Activated CD4-positive, alpha-beta T cell treated with anti-CD3 and anti-CD28 coated beads, Interleukin-2, amount 10 ng/mL, durations not matched to agents 24 days and 14 days (primary cell): ENCODE measurements at regions of chr17 and their contacts with region 1.

Region 1: GRCh38 chr17:37744961-37745800 is at the start of gene HNF1B:
- DNase-seq: peak; percentile 71
- H3K4me3 Mint-ChIP-seq: peak within 1 kb of the TSS; percentile 81
- H3K27ac Mint-ChIP-seq: peak within 1 kb of the TSS; percentile 53
- H3K4me1 Mint-ChIP-seq: peaks cover 13% of the 10 kb centered on the region
- H3K27me3 Mint-ChIP-seq: peaks cover 70% of the 10 kb centered on the region
- total RNA-seq, gene HNF1B: 2.2 and 2.9 TPM in 2 replicates

Region 2: DNA sequence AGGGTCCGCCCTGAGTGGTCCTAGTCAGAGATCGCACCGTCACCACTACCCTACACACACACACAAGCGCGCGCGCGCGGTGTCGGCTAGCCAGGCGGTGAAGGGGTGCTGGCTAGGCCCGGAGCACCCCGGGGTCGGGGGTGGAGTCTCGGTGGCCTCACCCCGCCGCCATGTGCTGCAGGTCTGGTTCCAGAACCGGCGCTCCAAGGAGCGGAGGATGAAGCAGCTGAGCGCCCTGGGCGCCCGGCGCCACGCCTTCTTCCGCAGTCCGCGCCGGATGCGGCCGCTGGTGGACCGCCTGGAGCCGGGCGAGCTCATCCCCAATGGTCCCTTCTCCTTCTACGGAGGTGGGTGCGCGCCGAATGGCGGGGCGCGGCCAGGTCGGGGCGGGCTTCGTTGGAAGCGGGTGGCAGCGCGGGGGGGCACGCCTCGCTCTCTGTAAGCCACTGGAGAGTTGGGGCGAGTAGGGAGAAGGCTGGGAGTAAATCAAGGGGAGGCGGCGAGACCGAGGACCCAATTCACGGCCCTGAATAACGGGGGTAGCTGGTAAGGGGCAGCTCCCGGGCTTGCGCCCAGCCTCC is 803.1 kb before region 1 on chr17:
- intact Hi-C with region 1: loop called (anchors 5 kb)
- DNase-seq: peak; percentile 67
- H3K4me3 Mint-ChIP-seq: peak overlapping the region; percentile 2
- H3K27ac Mint-ChIP-seq: peak overlapping the region; percentile 39
- H3K4me1 Mint-ChIP-seq: peaks cover 25% of the 10 kb centered on the region
- H3K27me3 Mint-ChIP-seq: peaks cover 78% of the 10 kb centered on the region

Region 3: DNA sequence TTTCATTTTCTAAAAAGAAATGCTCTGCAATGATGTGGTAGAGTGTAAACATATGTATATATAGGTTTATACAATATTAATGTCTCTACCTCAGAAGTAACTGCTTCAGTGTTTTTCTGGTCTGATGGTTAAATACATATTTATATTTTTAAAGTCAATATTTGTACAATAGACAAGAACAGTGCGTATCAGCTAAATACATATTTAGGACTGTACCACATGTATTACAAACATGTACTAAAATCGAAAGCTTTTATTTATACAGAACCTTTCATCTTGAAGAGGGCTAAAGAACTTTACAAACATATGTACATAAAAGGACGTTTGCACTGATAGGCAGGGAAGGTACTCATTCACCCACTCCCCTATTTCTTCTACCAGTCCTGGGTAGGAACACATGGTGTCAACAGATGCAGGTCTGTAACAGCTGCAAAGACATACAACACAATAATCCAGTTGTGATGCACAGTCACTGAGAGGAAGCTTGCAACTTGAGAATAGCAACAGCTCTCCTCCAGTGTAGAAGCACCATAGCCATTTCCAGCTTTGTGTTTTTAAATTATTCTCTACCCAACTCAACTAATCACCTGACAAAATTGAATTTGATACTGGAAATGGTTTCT is 576.3 kb before region 1 on chr17:
- intact Hi-C with region 1: no loop called
- DNase-seq: no peak
- H3K4me3 Mint-ChIP-seq: no peak overlapping the region
- H3K27ac Mint-ChIP-seq: no peak overlapping the region
- H3K4me1 Mint-ChIP-seq: no peaks in the 10 kb centered on the region
- H3K27me3 Mint-ChIP-seq: no peaks in the 10 kb centered on the region